ENCODE measurements at regions of chr2 and their contacts with region 1.

Region 1: GRCh38 chr2:168494190-168494711 is 38.2 kb downstream of the CERS6 start:
- DNase-seq: no peak
- H3K4me3 ChIP-seq: no peak overlapping the region
- H3K27ac ChIP-seq: no peak overlapping the region
- H3K4me1 ChIP-seq: peaks cover 2 to 7% (median 6%) of the 10 kb centered on the region in 4 experiments; a peak in 4 of 7 replicates
- H3K27me3 ChIP-seq: no peaks in the 10 kb centered on the region
- CTCF ChIP-seq: peak; percentile 46 to 56 (median 54)
- EP300 ChIP-seq: no peak
- POLR2A ChIP-seq: no peak
- RAD21 ChIP-seq: peak; percentile 44 to 70

Region 2: GRCh38 chr2:168480354-168480753 is 13.9 kb before region 1 on chr2:
- CTCF ChIA-PET with region 1: interaction called, 57 read pairs
- POLR2A ChIA-PET with region 1: interaction called, 3 read pairs
- DNase-seq: no peak
- H3K4me3 ChIP-seq: no peak overlapping the region
- H3K27ac ChIP-seq: no peak overlapping the region
- H3K4me1 ChIP-seq: peaks cover 0 to 9% (median 2%) of the 10 kb centered on the region in 4 experiments; a peak in 2 of 7 replicates
- H3K27me3 ChIP-seq: no peaks in the 10 kb centered on the region
- CTCF ChIP-seq: no peak
- EP300 ChIP-seq: no peak
- POLR2A ChIP-seq: no peak
- RAD21 ChIP-seq: no peak

Region 3: GRCh38 chr2:168510125-168510756 is 16.0 kb after region 1 on chr2:
- CTCF ChIA-PET with region 1: interaction called, 29 read pairs
- POLR2A ChIA-PET with region 1: no interaction called
- DNase-seq: no peak
- H3K4me3 ChIP-seq: no peak overlapping the region
- H3K27ac ChIP-seq: no peak overlapping the region
- H3K4me1 ChIP-seq: peaks cover 0 to 5% (median 0%) of the 10 kb centered on the region in 4 experiments; a peak in 1 of 7 replicates
- H3K27me3 ChIP-seq: no peaks in the 10 kb centered on the region
- CTCF ChIP-seq: no peak
- EP300 ChIP-seq: no peak
- POLR2A ChIP-seq: no peak
- RAD21 ChIP-seq: no peak

Region 4: DNA sequence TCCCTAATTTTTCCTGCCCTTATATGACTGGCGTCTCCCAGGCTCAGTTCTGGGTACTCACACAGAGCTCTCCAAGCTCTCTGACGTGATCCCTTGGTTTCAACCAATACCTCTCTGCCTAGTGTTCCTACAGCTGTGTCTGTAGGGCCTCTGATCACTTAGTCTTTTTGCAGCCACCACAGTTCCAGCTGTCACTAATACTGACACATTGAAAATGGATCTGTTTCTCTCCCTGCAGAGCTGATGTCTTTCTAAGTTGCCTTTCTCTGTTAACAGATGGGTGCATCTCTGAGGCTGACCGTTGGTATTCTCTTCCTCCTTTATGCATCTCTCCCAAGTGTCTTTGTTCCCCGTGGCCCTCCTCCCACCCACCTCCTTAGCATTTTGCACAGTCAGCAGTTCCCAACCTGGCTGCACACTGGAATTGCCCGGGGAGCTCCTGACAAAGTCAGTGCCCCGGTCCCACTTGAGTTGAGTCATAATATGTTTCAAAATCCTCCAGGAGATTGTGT is 24.4 kb after region 1 on chr2:
- CTCF ChIA-PET with region 1: interaction called, 11 read pairs
- POLR2A ChIA-PET with region 1: no interaction called
- DNase-seq: peak; percentile 13 to 47
- H3K4me3 ChIP-seq: no peak overlapping the region; a peak in 1 of 8 replicates
- H3K27ac ChIP-seq: no peak overlapping the region
- H3K4me1 ChIP-seq: peaks cover 0 to 15% (median 11%) of the 10 kb centered on the region in 4 experiments; a peak in 5 of 7 replicates
- H3K27me3 ChIP-seq: no peaks in the 10 kb centered on the region
- CTCF ChIP-seq: no peak
- EP300 ChIP-seq: no peak
- POLR2A ChIP-seq: no peak
- RAD21 ChIP-seq: no peak